GM13976 (cell line): ENCODE measurements at regions of chr21 and their contacts with region 1.

Region 1: GRCh38 chr21:39681831-39682230 is 63.2 kb upstream of the IGSF5 start:
- DNase-seq: no peak
- CTCF ChIP-seq: no peak

Region 2: GRCh38 chr21:39737511-39738233 is 55.8 kb after region 1 on chr21:
- in situ Hi-C with region 1: loop called (anchors 10 kb)
- DNase-seq: no peak
- CTCF ChIP-seq: no peak